Left ventricle myocardium inferior (tissue), 1 donor: ENCODE measurements at regions of chr9 and their contacts with region 1.

Region 1: GRCh38 chr9:133485361-133486260 is 6.7 kb upstream of the SLC2A6 start:
- DNase-seq: no peak
- H3K4me3 ChIP-seq: no peak overlapping the region
- H3K27ac ChIP-seq: no peak overlapping the region
- H3K4me1 ChIP-seq: no peaks in the 10 kb centered on the region
- H3K27me3 ChIP-seq: peaks cover 30% of the 10 kb centered on the region
- CTCF ChIP-seq: no peak

Region 2: GRCh38 chr9:133226219-133227171 is 259.1 kb before region 1 on chr9:
- intact Hi-C with region 1: no loop called
- DNase-seq: no peak
- H3K4me3 ChIP-seq: no peak overlapping the region
- H3K27ac ChIP-seq: peak overlapping the region; percentile 38
- H3K4me1 ChIP-seq: peaks cover 7% of the 10 kb centered on the region
- H3K27me3 ChIP-seq: peaks cover 32% of the 10 kb centered on the region
- CTCF ChIP-seq: no peak

Region 3: DNA sequence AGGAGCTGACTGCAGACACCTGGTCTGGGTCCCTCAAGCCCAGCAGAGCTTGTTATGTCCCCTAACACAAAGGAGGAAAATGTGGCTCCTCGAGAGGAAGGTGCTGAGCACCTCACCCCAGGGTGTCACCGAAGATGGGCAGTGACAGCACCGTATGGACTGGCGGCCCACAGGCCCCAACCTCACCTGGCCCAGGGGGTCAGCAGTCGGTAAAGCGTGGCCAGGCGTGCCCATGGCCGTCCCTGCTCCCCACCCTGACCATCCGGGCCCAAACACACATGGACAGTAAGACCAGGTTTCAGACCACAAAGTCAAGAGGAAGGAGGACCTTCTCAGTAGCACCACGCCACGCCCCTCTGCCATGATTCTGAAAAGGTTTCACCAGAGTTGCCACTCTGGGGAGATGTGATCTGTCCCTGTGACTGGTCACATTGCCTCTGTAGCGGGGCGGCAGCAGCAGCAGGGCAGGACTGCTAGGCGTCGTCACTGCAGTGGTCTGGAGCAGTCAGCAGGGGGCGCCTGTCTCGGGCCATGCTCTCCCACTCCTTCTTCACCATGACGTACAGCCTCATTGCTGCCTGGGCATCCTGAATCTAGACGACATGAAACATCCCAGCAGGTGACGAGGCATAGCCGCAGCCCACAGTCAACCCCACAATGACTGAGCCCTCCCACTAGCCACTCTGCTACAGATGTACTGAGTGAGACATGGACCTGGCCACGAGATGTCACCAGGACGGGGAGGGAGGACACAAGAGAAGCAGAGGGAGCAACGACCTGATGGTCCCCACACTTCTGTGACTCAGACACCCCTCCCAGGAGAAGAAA is 78.9 kb before region 1 on chr9:
- intact Hi-C with region 1: loop called (anchors 5 kb)
- DNase-seq: peak; percentile 74
- H3K4me3 ChIP-seq: no peak overlapping the region
- H3K27ac ChIP-seq: no peak overlapping the region
- H3K4me1 ChIP-seq: peaks cover 13% of the 10 kb centered on the region
- H3K27me3 ChIP-seq: no peaks in the 10 kb centered on the region
- CTCF ChIP-seq: peak; percentile 91

Region 4: DNA sequence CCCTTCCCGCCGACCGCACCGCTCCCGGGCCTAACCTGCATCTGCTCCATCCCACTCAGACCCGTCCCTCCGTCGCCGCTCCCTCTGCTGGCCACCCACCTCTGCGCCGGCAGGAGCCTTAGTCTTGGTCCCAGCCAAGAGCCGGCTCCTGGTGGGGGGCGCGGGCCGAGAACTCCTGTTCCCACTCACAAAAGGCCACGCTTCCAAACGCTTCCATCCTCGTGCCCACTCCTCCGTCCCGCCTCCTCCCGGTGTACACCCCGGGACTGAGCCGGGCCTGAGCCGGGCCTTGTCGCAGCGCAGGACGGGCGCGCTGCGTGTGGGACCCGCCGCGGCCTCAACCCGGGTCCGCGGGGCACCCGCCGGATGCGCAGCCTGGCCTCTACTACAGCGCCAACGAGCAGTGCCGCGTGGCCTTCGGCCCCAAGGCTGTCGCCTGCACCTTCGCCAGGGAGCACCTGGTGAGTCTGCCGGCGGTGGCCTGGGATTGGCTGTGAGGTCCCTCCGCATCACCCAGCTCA is 55.9 kb before region 1 on chr9:
- intact Hi-C with region 1: no loop called
- DNase-seq: no peak
- H3K4me3 ChIP-seq: no peak overlapping the region
- H3K27ac ChIP-seq: no peak overlapping the region
- H3K4me1 ChIP-seq: peaks cover 8% of the 10 kb centered on the region
- H3K27me3 ChIP-seq: peaks cover 51% of the 10 kb centered on the region
- CTCF ChIP-seq: peak; percentile 41

Region 5: GRCh38 chr9:133459476-133460404 is 25.9 kb before region 1 on chr9 and contains the start of gene CACFD1:
- intact Hi-C with region 1: no loop called
- DNase-seq: peak; percentile 97
- H3K4me3 ChIP-seq: peak within 1 kb of the TSS; percentile 79
- H3K27ac ChIP-seq: peak within 1 kb of the TSS; percentile 95
- H3K4me1 ChIP-seq: peaks cover 20% of the 10 kb centered on the region
- H3K27me3 ChIP-seq: no peaks in the 10 kb centered on the region
- CTCF ChIP-seq: no peak
- total RNA-seq, gene CACFD1: 11.5 TPM

Region 6: DNA sequence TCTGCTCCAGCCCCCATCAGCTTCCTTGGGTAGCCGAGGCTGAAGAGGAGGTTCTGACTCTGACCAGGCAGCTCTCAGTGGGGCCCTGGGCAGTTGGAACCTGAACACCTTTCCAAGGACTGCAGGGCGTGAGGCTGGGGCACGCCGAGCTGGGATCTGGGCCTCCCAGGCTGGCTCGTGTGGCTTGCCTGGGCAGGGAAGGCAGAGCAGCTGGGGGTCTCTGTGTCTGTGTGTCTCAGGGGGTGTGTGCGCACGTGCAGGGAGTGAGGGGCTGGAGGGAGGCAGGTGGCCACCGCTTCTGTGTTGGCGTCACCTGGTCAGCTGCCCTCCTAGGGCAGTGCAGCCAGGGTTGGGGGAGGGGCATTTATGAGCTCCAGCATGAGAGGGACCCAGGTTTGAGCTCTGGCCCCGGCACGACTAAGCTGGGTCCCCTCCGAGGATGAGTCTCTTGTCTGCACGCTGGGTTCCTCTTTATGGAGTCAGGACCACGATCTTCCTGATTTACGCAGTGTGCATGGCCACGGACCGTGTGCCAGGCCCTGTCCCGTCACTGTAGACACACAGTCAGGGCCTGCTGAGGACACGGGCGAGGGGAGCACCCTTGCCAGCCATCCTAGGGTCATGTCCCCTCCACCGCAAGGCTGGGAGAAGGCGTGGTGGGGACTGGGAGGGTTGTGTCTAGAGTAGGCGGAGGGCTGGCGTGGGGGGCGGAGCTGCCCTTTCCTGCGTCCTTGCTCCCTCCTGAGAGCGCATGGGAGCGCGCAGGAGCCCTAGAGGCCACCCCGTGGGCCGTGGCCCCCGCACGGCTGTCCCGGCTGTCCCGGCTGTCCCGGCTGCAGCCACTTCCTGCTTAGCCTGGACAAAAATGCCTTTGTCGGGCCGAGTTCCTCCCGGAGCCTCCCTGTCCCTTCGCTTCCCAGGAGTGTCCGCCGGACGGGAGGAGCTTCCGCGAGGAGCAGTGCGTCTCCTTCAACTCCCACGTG is 53.5 kb after region 1 on chr9:
- intact Hi-C with region 1: no loop called
- DNase-seq: peak; percentile 78
- H3K4me3 ChIP-seq: peak overlapping the region; percentile 57
- H3K27ac ChIP-seq: peak overlapping the region; percentile 85
- H3K4me1 ChIP-seq: peaks cover 71% of the 10 kb centered on the region
- H3K27me3 ChIP-seq: peaks cover 6% of the 10 kb centered on the region
- CTCF ChIP-seq: no peak